PC-9 (cell line): ENCODE measurements at regions of chr17 and their contacts with region 1.

Region 1: DNA sequence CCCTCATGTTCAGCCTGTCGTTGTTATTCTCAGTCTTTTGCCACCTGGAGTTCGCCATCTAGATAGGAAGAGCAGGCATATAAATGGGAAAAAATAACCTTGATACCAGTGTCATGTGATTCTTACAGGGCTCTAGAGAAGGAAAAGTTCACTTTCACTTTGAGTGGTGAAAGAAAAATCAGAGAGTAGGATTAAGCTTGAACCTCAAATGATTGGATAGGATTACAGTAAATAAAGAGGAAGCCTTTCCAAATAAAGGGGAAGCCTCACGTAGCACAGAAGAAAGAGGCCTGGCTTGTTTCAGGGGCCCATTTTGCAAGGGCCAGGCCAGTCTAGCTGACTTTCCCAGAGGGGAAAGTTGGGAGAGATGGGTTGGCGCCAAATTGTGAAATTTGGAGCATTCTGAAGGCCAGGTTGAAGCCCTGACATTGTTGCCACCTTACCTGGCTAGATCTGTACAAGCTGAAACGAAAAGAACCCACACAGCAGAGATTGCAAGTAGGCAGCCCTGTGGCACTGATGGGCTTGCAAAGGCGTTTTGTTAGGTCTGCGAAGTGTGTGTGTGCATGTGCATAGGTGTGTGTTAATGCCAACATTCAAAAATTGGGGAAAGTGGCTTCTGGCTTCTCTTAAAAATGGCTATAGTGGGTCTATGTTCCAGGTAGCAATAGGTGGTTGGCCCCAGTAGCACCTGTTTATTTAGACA is 38.8 kb downstream of the TMC6 start:
- DNase-seq: no peak
- H3K4me3 ChIP-seq: no peak overlapping the region
- H3K27ac ChIP-seq: no peak overlapping the region
- H3K4me1 ChIP-seq: no peaks in the 10 kb centered on the region
- H3K27me3 ChIP-seq: 0 out of 2 replicates have a peak, but pooled peaks cover 3% of the 10 kb centered on the region
- CTCF ChIP-seq: no peak

Region 2: DNA sequence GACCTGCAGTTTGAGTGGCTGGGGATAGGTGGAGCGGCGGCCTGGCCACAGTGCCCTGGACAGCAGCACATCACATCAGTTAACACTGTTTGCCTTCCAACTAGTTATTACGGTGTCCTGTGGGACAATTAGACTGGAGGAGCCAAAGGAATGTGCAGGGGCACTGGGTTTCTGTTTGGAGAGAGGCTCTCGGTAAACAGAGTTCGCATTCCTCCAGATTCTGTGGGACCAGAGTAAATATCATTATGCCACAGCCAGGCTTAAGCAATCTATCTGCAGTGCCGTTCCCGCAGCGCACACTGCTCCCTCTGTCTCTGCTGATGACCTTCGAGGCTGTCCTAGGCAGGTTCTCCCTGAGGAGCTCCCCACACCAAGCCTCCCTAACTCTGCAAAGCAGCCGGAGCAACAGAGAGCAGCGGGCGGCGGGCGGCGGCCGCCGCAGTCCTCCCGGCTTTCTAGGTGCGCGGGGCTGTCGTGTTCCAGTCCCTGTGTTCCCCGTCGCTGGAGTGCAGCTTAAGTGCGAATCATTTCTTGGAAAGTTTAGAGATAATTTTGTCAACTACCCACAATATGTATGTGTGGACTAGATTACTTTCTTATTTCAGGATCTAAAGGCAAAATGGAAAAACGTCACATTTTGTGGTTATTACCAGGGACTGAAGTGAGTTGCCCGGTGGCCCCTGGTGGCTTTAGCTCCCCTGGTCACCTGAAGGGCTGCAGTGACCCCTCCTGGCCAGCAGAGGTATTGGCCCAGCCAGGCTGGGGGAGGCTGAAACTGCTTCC is 331.9 kb after region 1 on chr17:
- CTCF ChIA-PET with region 1: interaction called, 3 read pairs
- POLR2A ChIA-PET with region 1: no interaction called
- intact Hi-C with region 1: loop called (anchors 5 kb)
- DNase-seq: peak; percentile 47 to 77
- H3K4me3 ChIP-seq: no peak overlapping the region
- H3K27ac ChIP-seq: no peak overlapping the region
- H3K4me1 ChIP-seq: no peaks in the 10 kb centered on the region
- H3K27me3 ChIP-seq: no peaks in the 10 kb centered on the region
- CTCF ChIP-seq: peak; percentile 87

Region 3: GRCh38 chr17:78665952-78666920 is 576.5 kb after region 1 on chr17:
- CTCF ChIA-PET with region 1: no interaction called
- POLR2A ChIA-PET with region 1: no interaction called
- intact Hi-C with region 1: no loop called
- DNase-seq: peak in 1 of 2 experiments; percentile 71
- H3K4me3 ChIP-seq: no peak overlapping the region
- H3K27ac ChIP-seq: no peak overlapping the region
- H3K4me1 ChIP-seq: peaks cover 9% of the 10 kb centered on the region
- H3K27me3 ChIP-seq: no peaks in the 10 kb centered on the region
- CTCF ChIP-seq: no peak